ENCODE measurements at regions of chr4 and their contacts with region 1.

Region 1: DNA sequence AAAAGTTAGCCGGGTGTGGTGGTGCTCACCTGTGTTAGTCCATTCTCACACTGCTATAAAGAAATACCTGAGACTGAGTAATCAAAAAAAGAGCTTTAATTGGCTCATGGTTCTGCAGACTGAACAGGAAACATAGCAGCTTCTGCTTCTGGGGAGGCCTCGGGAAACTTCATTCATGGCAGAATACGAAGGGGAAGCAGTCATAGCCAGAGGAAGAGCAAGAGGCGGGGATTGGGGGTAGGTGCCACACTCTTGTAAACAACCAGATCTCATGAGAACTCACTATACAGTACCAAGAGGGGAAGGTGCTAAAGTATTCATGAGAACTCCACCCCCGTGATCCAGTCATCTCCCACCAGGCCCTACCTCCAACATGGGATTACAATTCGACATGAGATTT is 64.1 kb downstream of the BEND4 start:
- DNase-seq: no peak
- H3K4me3 Mint-ChIP-seq: no peak overlapping the region
- H3K27ac Mint-ChIP-seq: no peak overlapping the region
- H3K4me1 Mint-ChIP-seq: no peaks in the 10 kb centered on the region
- H3K27me3 Mint-ChIP-seq: no peaks in the 10 kb centered on the region

Region 2: DNA sequence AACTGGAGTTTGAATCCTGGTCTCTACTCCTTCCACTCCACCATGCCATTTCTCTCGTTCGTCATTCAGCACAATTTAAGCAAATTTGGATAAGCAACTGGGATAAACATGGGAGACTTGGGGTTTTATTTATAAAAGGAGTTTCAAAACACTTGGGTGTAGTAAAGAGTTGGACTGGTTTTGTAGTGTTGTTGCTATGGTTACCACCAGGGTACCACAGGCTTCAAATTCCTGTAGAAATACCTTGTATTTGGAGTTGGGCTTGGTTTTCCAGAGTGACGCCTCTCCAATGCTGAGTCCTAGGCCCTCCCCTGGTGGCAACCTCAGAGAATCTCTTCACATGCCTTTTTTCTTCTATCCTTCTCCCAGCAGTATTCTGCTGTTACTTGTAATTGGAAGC is 311.9 kb before region 1 on chr4:
- intact Hi-C with region 1: no loop called
- DNase-seq: no peak
- H3K4me3 Mint-ChIP-seq: no peak overlapping the region
- H3K27ac Mint-ChIP-seq: no peak overlapping the region
- H3K4me1 Mint-ChIP-seq: no peaks in the 10 kb centered on the region
- H3K27me3 Mint-ChIP-seq: peaks cover 3% of the 10 kb centered on the region

Region 3: GRCh38 chr4:42018451-42018850 is 69.9 kb before region 1 on chr4:
- intact Hi-C with region 1: loop called (anchors 5 kb)
- DNase-seq: no peak
- H3K4me3 Mint-ChIP-seq: no peak overlapping the region
- H3K27ac Mint-ChIP-seq: no peak overlapping the region
- H3K4me1 Mint-ChIP-seq: peaks cover 5% of the 10 kb centered on the region
- H3K27me3 Mint-ChIP-seq: no peaks in the 10 kb centered on the region